ENCODE measurements at regions of chr11 and their contacts with region 1.

Region 1: DNA sequence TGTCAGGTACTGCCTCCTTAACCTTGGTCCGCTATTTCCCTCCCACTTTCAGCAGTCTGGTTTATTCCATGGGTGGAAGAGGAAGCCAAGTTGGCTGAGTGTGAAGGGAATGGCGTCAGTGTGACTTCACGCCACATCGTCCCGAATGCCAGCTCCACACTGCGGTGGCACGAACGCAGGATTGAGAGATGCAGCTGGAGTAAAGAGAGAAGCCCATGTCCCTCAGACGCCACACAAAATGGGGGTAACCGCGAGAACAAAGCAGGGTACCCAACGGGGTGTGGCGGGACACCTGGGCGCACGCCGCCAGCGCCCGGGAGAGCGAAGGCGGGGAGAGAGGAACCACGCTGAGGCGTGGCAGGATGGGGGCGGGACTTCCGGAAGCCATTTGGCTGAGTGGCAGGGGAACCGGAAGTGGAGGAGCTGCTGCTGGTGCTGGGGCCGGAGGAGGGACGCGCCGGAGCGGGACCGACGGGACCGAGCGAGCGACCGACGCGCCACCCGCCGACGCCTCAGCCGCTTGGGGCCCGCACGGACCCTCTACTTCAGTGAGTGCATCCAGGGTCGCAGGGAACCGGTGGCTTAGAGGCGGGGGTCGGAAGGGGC is at the start of gene PAFAH1B2:
- DNase-seq: peak; percentile 98
- H3K4me3 ChIP-seq: peak within 1 kb of the TSS; percentile 83 to 93 (median 88)
- H3K27ac ChIP-seq: peak within 1 kb of the TSS; percentile 95 to 97 (median 97)
- H3K4me1 ChIP-seq: peaks cover 0 to 45% (median 37%) of the 10 kb centered on the region in 4 donors
- H3K27me3 ChIP-seq: no peaks in the 10 kb centered on the region
- CTCF ChIP-seq: no peak
- EP300 ChIP-seq: no peak
- POLR2A ChIP-seq: peak; percentile 91
- total RNA-seq, gene PAFAH1B2: 42.1 to 76.4 (median 58.0) TPM

Region 2: GRCh38 chr11:117098269-117099232 is 45.4 kb before region 1 on chr11 and contains the start of gene SIK3:
- intact Hi-C with region 1: loop called (anchors 2 kb)
- DNase-seq: peak; percentile 97
- H3K4me3 ChIP-seq: peak within 1 kb of the TSS; percentile 77 to 98 (median 91)
- H3K27ac ChIP-seq: peak within 1 kb of the TSS; percentile 97 to 100 (median 98)
- H3K4me1 ChIP-seq: peaks cover 0 to 49% (median 44%) of the 10 kb centered on the region in 4 donors
- H3K27me3 ChIP-seq: no peaks in the 10 kb centered on the region
- CTCF ChIP-seq: peak in 2 of 4 experiments; percentile 20 to 32
- EP300 ChIP-seq: peak in 2 of 4 donors; percentile 76 to 82
- POLR2A ChIP-seq: peak; percentile 51 to 76
- total RNA-seq, gene SIK3: 35.3 to 53.2 (median 40.9) TPM

Region 3: DNA sequence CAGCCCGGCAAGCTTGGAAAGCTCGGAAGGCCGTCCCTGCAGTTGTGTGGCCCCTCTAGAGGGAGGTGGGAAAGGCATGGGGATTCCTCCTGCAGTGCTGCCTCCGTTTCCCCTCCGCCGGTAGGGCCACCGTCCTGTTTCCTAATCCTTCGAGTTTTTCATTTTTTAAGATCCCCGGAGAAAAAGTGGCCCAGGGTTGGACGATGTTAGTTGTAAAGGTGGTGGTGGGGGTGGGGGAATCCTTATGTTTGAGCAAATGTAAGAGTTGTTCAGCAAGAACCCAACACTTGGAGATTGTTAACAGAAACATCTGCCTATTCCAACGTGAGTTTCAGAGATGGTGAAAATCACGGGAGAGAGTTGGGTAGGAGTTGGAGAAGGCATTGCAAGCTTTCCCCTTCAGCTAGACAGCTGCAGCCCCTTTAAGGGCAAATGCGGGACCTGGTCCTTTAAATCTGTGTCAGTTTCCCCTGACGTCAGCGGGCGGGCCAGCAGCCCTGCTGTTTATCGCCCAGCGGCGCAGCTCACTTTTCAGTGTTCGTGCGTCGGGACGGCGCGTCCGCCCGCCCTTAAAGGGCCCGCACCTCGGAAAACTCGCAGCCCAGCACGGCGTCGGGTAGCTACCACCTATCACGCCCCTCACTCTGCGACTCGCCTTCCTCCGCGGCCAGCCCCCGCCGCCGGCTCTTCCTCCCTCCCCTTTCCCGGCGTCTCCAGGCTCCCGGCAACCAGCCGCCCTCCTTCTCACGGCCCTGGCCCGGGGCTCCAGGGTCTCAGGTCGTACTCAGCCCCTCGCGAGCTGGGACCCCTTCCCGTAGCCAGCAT is 34.4 kb after region 1 on chr11 and contains the start of gene SIDT2:
- intact Hi-C with region 1: loop called (anchors 2 kb)
- DNase-seq: peak; percentile 98
- H3K4me3 ChIP-seq: peak within 1 kb of the TSS; percentile 77 to 99 (median 88)
- H3K27ac ChIP-seq: peak within 1 kb of the TSS; percentile 92 to 99 (median 96)
- H3K4me1 ChIP-seq: peaks cover 0 to 49% (median 35%) of the 10 kb centered on the region in 4 donors
- H3K27me3 ChIP-seq: no peaks in the 10 kb centered on the region
- CTCF ChIP-seq: no peak
- EP300 ChIP-seq: peak in 2 of 4 donors; percentile 67 to 80
- POLR2A ChIP-seq: peak; percentile 89 to 95
- total RNA-seq, gene SIDT2: 20.7 to 50.7 (median 28.5) TPM

Region 4: DNA sequence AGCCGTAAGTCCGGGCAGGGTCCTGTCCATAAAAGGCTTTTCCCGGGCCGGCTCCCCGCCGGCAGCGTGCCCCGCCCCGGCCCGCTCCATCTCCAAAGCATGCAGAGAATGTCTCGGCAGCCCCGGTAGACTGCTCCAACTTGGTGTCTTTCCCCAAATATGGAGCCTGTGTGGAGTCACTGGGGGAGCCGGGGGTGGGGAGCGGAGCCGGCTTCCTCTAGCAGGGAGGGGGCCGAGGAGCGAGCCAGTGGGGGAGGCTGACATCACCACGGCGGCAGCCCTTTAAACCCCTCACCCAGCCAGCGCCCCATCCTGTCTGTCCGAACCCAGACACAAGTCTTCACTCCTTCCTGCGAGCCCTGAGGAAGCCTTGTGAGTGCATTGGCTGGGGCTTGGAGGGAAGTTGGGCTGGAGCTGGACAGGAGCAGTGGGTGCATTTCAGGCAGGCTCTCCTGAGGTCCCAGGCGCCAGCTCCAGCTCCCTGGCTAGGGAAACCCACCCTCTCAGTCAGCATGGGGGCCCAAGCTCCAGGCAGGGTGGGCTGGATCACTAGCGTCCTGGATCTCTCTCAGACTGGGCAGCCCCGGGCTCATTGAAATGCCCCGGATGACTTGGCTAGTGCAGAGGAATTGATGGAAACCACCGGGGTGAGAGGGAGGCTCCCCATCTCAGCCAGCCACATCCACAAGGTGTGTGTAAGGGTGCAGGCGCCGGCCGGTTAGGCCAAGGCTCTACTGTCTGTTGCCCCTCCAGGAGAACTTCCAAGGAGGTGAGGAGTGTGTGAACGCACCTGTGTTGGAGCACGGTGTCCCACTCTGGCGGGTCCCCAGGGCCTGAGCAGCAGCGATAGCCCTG is 55.3 kb after region 1 on chr11 and contains the start of gene TAGLN:
- intact Hi-C with region 1: loop called (anchors 5 kb)
- DNase-seq: peak; percentile 97
- H3K4me3 ChIP-seq: peak within 1 kb of the TSS; percentile 59 to 90 (median 86)
- H3K27ac ChIP-seq: peak within 1 kb of the TSS; percentile 90 to 99 (median 96)
- H3K4me1 ChIP-seq: peaks cover 0 to 40% (median 36%) of the 10 kb centered on the region in 4 donors
- H3K27me3 ChIP-seq: no peaks in the 10 kb centered on the region
- CTCF ChIP-seq: no peak
- EP300 ChIP-seq: peak in 2 of 4 donors; percentile 42 to 62
- POLR2A ChIP-seq: peak; percentile 86 to 97
- total RNA-seq, gene TAGLN: 6,854 to 14,048 (median 12,596) TPM

Region 5: GRCh38 chr11:117232092-117232878 is 88.3 kb after region 1 on chr11 and contains the start of gene RNF214:
- intact Hi-C with region 1: loop called (anchors 2 kb)
- DNase-seq: peak; percentile 86
- H3K4me3 ChIP-seq: peak within 1 kb of the TSS; percentile 79 to 98 (median 92)
- H3K27ac ChIP-seq: peak within 1 kb of the TSS; percentile 95 to 99 (median 96)
- H3K4me1 ChIP-seq: peaks cover 2 to 38% (median 32%) of the 10 kb centered on the region in 4 donors
- H3K27me3 ChIP-seq: no peaks in the 10 kb centered on the region
- CTCF ChIP-seq: peak; percentile 80 to 94 (median 84)
- EP300 ChIP-seq: no peak
- POLR2A ChIP-seq: peak; percentile 39 to 57
- total RNA-seq, gene RNF214: 11.1 to 23.8 (median 12.8) TPM

Region 6: GRCh38 chr11:117479372-117479771 is 335.4 kb after region 1 on chr11:
- intact Hi-C with region 1: no loop called
- DNase-seq: no peak
- H3K4me3 ChIP-seq: no peak overlapping the region
- H3K27ac ChIP-seq: no peak overlapping the region
- H3K4me1 ChIP-seq: no peaks in the 10 kb centered on the region
- H3K27me3 ChIP-seq: no peaks in the 10 kb centered on the region
- CTCF ChIP-seq: no peak
- EP300 ChIP-seq: no peak
- POLR2A ChIP-seq: no peak